Heart right ventricle (tissue), 16 donors: ENCODE measurements at regions of chr18 and their contacts with region 1.

Region 1: GRCh38 chr18:74963820-74964446 is 245.0 kb downstream of the PTGR3 start:
- DNase-seq: peak in 1 of 2 donors; percentile 61
- ATAC-seq: peak; percentile 68 to 93 (median 84)
- H3K4me3 ChIP-seq: no peak overlapping the region
- H3K27ac ChIP-seq: no peak overlapping the region
- H3K4me1 ChIP-seq: peaks cover 0 to 11% (median 4%) of the 10 kb centered on the region in 9 donors
- H3K27me3 ChIP-seq: no peaks in the 10 kb centered on the region
- CTCF ChIP-seq: peak in 7 of 9 donors; percentile 42 to 58 (median 52)

Region 2: GRCh38 chr18:74661691-74662090 is 302.2 kb before region 1 on chr18:
- intact Hi-C with region 1: loop called in 8 of 10 experiments (anchors 5 to 10 kb)
- DNase-seq: no peak
- ATAC-seq: no peak
- H3K4me3 ChIP-seq: no peak overlapping the region
- H3K27ac ChIP-seq: no peak overlapping the region
- H3K4me1 ChIP-seq: peaks cover 0 to 6% (median 0%) of the 10 kb centered on the region in 9 donors
- H3K27me3 ChIP-seq: no peaks in the 10 kb centered on the region
- CTCF ChIP-seq: no peak

Region 3: DNA sequence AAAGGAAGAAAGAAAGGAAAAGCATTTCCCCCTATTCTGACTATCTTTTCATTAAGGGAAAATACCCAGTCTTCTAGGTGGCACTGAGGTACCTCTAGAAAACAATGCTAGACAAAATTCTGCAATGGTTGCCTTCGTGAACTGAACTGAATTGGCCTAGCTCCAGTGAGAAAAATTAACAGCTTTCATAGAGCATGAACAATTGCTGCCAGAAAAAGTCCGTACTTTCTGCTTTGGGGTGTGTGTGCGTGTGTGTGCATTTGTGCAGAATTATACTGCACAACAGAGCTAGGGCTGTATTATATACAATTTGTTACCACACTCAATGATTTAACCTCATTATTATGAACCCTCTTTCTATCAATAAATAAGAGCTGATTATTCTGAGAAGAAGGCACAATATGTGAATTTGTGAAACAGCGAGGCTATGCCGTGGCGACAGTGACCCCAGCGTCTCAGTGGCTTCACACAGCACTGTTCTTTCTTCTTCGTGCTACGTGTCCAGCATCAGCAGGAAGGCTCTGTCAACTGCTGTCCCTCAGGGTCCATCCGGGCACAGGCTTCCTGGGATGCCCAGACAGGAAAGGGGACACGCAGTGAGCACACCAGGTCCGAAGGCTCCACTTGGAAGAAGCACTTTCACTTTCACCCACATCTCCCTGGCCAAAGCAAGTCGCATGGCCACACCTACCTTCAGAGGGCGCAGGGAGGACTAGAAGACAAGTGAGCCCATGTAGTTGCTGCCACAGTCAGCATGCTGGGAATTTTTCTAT is 197.5 kb after region 1 on chr18:
- intact Hi-C with region 1: loop called in 1 of 10 experiments (anchors 10 kb)
- DNase-seq: peak in 1 of 2 donors; percentile 28
- ATAC-seq: peak; percentile 32 to 86 (median 72)
- H3K4me3 ChIP-seq: peak overlapping the region in 9 of 10 donors; percentile 24 to 62 (median 49)
- H3K27ac ChIP-seq: peak overlapping the region in 6 of 10 donors; percentile 20 to 50 (median 40)
- H3K4me1 ChIP-seq: peaks cover 0 to 16% (median 5%) of the 10 kb centered on the region in 9 donors
- H3K27me3 ChIP-seq: no peaks in the 10 kb centered on the region
- CTCF ChIP-seq: peak in 5 of 9 donors; percentile 4 to 30 (median 11)